Left ventricle myocardium inferior (tissue), 1 donor: ENCODE measurements at regions of chr1 and their contacts with region 1.

Region 1: GRCh38 chr1:100351095-100351891 is 1.0 kb upstream of the CDC14A start:
- DNase-seq: peak; percentile 88
- H3K4me3 ChIP-seq: peak overlapping the region; percentile 98
- H3K27ac ChIP-seq: peak overlapping the region; percentile 95
- H3K4me1 ChIP-seq: peaks cover 49% of the 10 kb centered on the region
- H3K27me3 ChIP-seq: no peaks in the 10 kb centered on the region
- CTCF ChIP-seq: peak; percentile 47

Region 2: GRCh38 chr1:100443811-100444571 is 92.7 kb after region 1 on chr1:
- intact Hi-C with region 1: loop called (anchors 10 kb)
- DNase-seq: no peak
- H3K4me3 ChIP-seq: no peak overlapping the region
- H3K27ac ChIP-seq: peak overlapping the region; percentile 39
- H3K4me1 ChIP-seq: peaks cover 37% of the 10 kb centered on the region
- H3K27me3 ChIP-seq: no peaks in the 10 kb centered on the region
- CTCF ChIP-seq: no peak